ENCODE measurements at regions of chr7 and their contacts with region 1.

Region 1: GRCh38 chr7:140646931-140647647 is 6.5 kb upstream of the DENND2A start:
- DNase-seq: peak; percentile 74 to 97
- ATAC-seq: peak; percentile 97 to 99
- H3K4me3 ChIP-seq: no peak overlapping the region
- H3K27ac ChIP-seq: peak overlapping the region in 1 of 2 experiments; percentile 62; a peak in 2 of 6 replicates
- H3K4me1 ChIP-seq: peaks cover 11% of the 10 kb centered on the region; the same call in 1 of the 3 replicates
- CTCF ChIP-seq: peak; percentile 62
- EP300 ChIP-seq: no peak
- POLR2A ChIP-seq: no peak
- RAD21 ChIP-seq: peak; percentile 57 to 60; a peak in 4 of 5 replicates

Region 2: GRCh38 chr7:140479062-140479738 is 167.9 kb before region 1 on chr7 and contains the start of gene MKRN1:
- CTCF ChIA-PET with region 1: interaction called, 29 read pairs
- POLR2A ChIA-PET with region 1: no interaction called
- DNase-seq: peak; percentile 91 to 95
- ATAC-seq: peak; percentile 97 to 98
- H3K4me3 ChIP-seq: peak within 1 kb of the TSS; percentile 82
- H3K27ac ChIP-seq: peak within 1 kb of the TSS; percentile 89 to 95
- H3K4me1 ChIP-seq: peaks cover 13% of the 10 kb centered on the region; the same call in 2 of the 3 replicates
- CTCF ChIP-seq: no peak
- EP300 ChIP-seq: no peak
- POLR2A ChIP-seq: peak; percentile 47
- RAD21 ChIP-seq: no peak
- polyA plus RNA-seq, gene MKRN1: 65.1 and 68.8 TPM in 2 replicates

Region 3: DNA sequence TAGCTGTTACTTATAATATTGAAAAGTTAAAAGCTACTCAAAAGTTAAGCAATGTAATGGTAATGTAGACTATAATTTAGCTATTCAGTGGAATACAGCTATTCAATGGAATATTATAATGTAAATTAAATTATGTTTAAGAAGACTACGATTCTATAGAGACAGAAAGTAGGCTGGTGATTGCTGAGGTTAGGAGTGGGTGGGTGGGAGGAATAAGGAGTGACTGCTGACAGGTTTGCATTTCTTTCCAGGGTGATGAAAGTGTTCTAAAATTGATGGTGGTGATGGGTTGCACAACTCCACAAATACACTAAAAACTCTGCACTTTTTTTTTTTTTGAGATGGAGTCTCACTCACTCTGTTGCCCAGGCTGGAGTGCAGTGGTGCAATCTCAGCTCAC is 27.9 kb before region 1 on chr7:
- CTCF ChIA-PET with region 1: interaction called, 12 read pairs
- POLR2A ChIA-PET with region 1: no interaction called
- DNase-seq: no peak
- ATAC-seq: no peak
- H3K4me3 ChIP-seq: no peak overlapping the region
- H3K27ac ChIP-seq: no peak overlapping the region
- H3K4me1 ChIP-seq: peaks cover 6% of the 10 kb centered on the region; the same call in 1 of the 3 replicates
- CTCF ChIP-seq: no peak
- EP300 ChIP-seq: no peak
- POLR2A ChIP-seq: no peak
- RAD21 ChIP-seq: no peak

Region 4: GRCh38 chr7:140661121-140661520 is 14.0 kb after region 1 on chr7:
- CTCF ChIA-PET with region 1: interaction called, 10 read pairs
- POLR2A ChIA-PET with region 1: no interaction called
- DNase-seq: peak in 1 of 2 experiments; percentile 28
- ATAC-seq: peak; percentile 70 to 86; a peak in 5 of 6 replicates
- H3K4me3 ChIP-seq: no peak overlapping the region
- H3K27ac ChIP-seq: no peak overlapping the region
- H3K4me1 ChIP-seq: no peaks in the 10 kb centered on the region
- CTCF ChIP-seq: no peak; the same call in 2 of the 3 replicates
- EP300 ChIP-seq: no peak
- POLR2A ChIP-seq: no peak
- RAD21 ChIP-seq: peak; percentile 50 to 62

Measured in A549 (cell line).